Mammary epithelial cell (primary cell): ENCODE measurements at regions of chr17 and their contacts with region 1.

Region 1: GRCh38 chr17:50626037-50626574 is 8.6 kb upstream of the ABCC3 start:
- DNase-seq: peak; percentile 39
- H3K4me3 ChIP-seq: no peak overlapping the region
- H3K27ac ChIP-seq: no peak overlapping the region
- H3K4me1 ChIP-seq: no peaks in the 10 kb centered on the region
- H3K27me3 ChIP-seq: no peaks in the 10 kb centered on the region
- CTCF ChIP-seq: peak; percentile 62 to 80

Region 2: GRCh38 chr17:50361561-50362480 is 264.3 kb before region 1 on chr17:
- CTCF ChIA-PET with region 1: no interaction called
- dilution Hi-C with region 1: no loop called
- in situ Hi-C with region 1: no loop called
- intact Hi-C with region 1: loop called (anchors 5 kb)
- DNase-seq: peak; percentile 46
- H3K4me3 ChIP-seq: no peak overlapping the region
- H3K27ac ChIP-seq: no peak overlapping the region
- H3K4me1 ChIP-seq: no peaks in the 10 kb centered on the region
- H3K27me3 ChIP-seq: no peaks in the 10 kb centered on the region
- CTCF ChIP-seq: peak; percentile 81

Region 3: GRCh38 chr17:50534222-50534978 is 91.7 kb before region 1 on chr17:
- CTCF ChIA-PET with region 1: no interaction called
- dilution Hi-C with region 1: no loop called
- in situ Hi-C with region 1: no loop called
- intact Hi-C with region 1: no loop called
- DNase-seq: peak; percentile 86
- H3K4me3 ChIP-seq: peak overlapping the region; percentile 51 to 87 (median 64)
- H3K27ac ChIP-seq: peak overlapping the region; percentile 36
- H3K4me1 ChIP-seq: peaks cover 56% of the 10 kb centered on the region
- H3K27me3 ChIP-seq: no peaks in the 10 kb centered on the region
- CTCF ChIP-seq: peak; percentile 52 to 74

Region 4: DNA sequence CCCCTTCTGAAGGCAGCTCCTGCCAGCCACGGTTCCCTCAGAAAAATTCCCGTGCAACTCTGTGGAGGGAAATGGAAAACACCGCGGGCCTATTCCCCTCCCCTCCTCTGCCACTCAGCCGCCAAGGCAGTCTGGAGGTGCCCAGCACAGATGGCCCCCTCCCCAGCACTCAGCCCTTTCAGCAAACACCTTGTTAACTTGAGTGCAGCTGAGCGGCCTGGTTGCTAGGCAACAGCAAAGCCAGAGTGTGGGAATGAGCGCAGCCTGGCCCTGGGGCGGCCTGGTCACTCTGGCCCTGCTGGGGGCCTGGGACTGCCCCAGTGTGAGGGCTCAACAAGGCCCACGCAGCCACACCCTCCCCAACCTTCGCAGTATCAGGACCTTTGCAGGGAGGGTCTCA is 32.8 kb before region 1 on chr17:
- CTCF ChIA-PET with region 1: no interaction called
- dilution Hi-C with region 1: loop called (anchors 5 kb)
- in situ Hi-C with region 1: no loop called
- intact Hi-C with region 1: no loop called
- DNase-seq: no peak
- H3K4me3 ChIP-seq: no peak overlapping the region
- H3K27ac ChIP-seq: no peak overlapping the region
- H3K4me1 ChIP-seq: no peaks in the 10 kb centered on the region
- H3K27me3 ChIP-seq: no peaks in the 10 kb centered on the region
- CTCF ChIP-seq: no peak

Region 5: DNA sequence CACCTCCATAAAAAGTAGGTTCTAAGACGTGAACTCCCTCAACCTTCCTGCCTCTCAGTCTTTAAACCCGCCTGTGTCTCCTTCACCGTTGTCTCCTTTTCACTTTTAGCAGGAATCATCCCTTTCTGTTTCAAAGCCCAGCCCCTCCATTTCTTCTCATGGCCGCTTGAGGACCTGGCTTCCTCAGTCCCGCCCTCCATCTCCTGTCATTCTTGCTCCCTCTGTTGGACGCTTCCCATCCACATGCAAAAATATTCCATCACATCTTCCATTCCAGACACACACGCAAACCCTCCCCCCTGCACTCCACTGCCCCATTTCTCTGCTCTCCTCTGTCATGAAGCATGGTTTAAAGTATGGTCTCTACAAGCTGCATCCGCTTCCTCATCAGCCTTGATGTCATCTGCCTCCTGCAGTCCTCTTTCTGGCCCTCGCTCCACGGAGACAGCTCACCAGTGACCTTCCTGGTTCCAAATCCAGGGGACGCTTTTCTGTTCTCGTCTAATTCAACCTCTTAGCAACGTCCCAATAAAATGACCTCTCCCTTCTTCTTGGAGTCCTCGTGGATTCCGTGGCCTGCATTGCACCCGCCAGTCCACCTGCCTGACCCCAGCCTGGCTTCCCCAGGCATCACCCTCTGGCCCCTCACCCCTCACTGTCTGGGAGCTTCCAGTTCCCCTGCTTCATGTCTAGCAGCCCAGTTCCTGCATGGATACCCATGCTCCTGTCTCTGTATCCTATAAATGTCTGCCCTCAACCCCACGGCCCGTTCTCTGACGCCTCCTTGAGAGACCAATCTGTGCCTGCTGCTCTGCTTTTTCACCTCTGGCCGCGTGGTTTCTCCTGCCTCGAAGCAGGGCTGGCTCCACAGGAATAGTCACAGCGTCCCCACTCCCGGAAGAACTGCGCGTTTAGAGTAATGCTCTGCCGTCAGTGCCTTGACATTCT is 55.4 kb after region 1 on chr17:
- CTCF ChIA-PET with region 1: no interaction called
- dilution Hi-C with region 1: loop called (anchors 10 kb)
- in situ Hi-C with region 1: no loop called
- intact Hi-C with region 1: loop called (anchors 1 kb)
- DNase-seq: no peak
- H3K4me3 ChIP-seq: no peak overlapping the region
- H3K27ac ChIP-seq: no peak overlapping the region
- H3K4me1 ChIP-seq: peaks cover 6% of the 10 kb centered on the region
- H3K27me3 ChIP-seq: no peaks in the 10 kb centered on the region
- CTCF ChIP-seq: peak; percentile 20 to 59

Region 6: GRCh38 chr17:50707289-50708049 is 81.4 kb after region 1 on chr17 and contains the start of gene ANKRD40:
- CTCF ChIA-PET with region 1: no interaction called
- dilution Hi-C with region 1: no loop called
- in situ Hi-C with region 1: no loop called
- intact Hi-C with region 1: loop called (anchors 2 kb)
- DNase-seq: peak; percentile 94
- H3K4me3 ChIP-seq: peak within 1 kb of the TSS; percentile 87 to 95 (median 88)
- H3K27ac ChIP-seq: peak within 1 kb of the TSS; percentile 98
- H3K4me1 ChIP-seq: peaks cover 14% of the 10 kb centered on the region
- H3K27me3 ChIP-seq: no peaks in the 10 kb centered on the region
- CTCF ChIP-seq: no peak
- total RNA-seq, gene ANKRD40: 36.3 to 38.5 TPM